Endothelial cell of umbilical vein (primary cell): ENCODE measurements at regions of chr3 and their contacts with region 1.

Region 1: GRCh38 chr3:126926684-126927400 is 56.1 kb upstream of the PLXNA1 start:
- DNase-seq: peak; percentile 88
- H3K4me3 ChIP-seq: no peak overlapping the region
- H3K27ac ChIP-seq: peak overlapping the region; percentile 40
- H3K4me1 ChIP-seq: peaks cover 44% of the 10 kb centered on the region
- H3K27me3 ChIP-seq: peaks cover 3 to 29% of the 10 kb centered on the region in 2 experiments
- CTCF ChIP-seq: peak; percentile 16 to 30
- POLR2A ChIP-seq: no peak

Region 2: GRCh38 chr3:126212602-126213378 is 714.1 kb before region 1 on chr3:
- CTCF ChIA-PET with region 1: no interaction called
- POLR2A ChIA-PET with region 1: no interaction called
- dilution Hi-C with region 1: no loop called
- intact Hi-C with region 1: no loop called
- DNase-seq: peak; percentile 47
- H3K4me3 ChIP-seq: peak overlapping the region in 2 of 3 experiments; percentile 31 to 34
- H3K27ac ChIP-seq: no peak overlapping the region
- H3K4me1 ChIP-seq: peaks cover 11% of the 10 kb centered on the region
- H3K27me3 ChIP-seq: peaks cover 24 to 29% of the 10 kb centered on the region in 2 experiments
- CTCF ChIP-seq: peak; percentile 29 to 61
- POLR2A ChIP-seq: no peak

Region 3: GRCh38 chr3:126939338-126939718 is 12.5 kb after region 1 on chr3:
- CTCF ChIA-PET with region 1: interaction called, 12 read pairs
- POLR2A ChIA-PET with region 1: no interaction called
- dilution Hi-C with region 1: no loop called
- intact Hi-C with region 1: no loop called
- DNase-seq: peak; percentile 39
- H3K4me3 ChIP-seq: no peak overlapping the region
- H3K27ac ChIP-seq: no peak overlapping the region
- H3K4me1 ChIP-seq: peaks cover 2% of the 10 kb centered on the region
- H3K27me3 ChIP-seq: peaks cover 2 to 7% of the 10 kb centered on the region in 2 experiments
- CTCF ChIP-seq: peak in 1 of 2 donors; percentile 21
- POLR2A ChIP-seq: no peak

Region 4: GRCh38 chr3:126961191-126961790 is 34.4 kb after region 1 on chr3:
- CTCF ChIA-PET with region 1: interaction called, 5 read pairs
- POLR2A ChIA-PET with region 1: no interaction called
- dilution Hi-C with region 1: no loop called
- intact Hi-C with region 1: loop called (anchors 1 kb)
- DNase-seq: no peak
- H3K4me3 ChIP-seq: no peak overlapping the region
- H3K27ac ChIP-seq: no peak overlapping the region
- H3K4me1 ChIP-seq: peaks cover 4% of the 10 kb centered on the region
- H3K27me3 ChIP-seq: peaks cover 0 to 1% of the 10 kb centered on the region in 2 experiments
- CTCF ChIP-seq: no peak
- POLR2A ChIP-seq: no peak